Pancreas (tissue), 10 donors: ENCODE measurements at regions of chr14 and their contacts with region 1.

Region 1: DNA sequence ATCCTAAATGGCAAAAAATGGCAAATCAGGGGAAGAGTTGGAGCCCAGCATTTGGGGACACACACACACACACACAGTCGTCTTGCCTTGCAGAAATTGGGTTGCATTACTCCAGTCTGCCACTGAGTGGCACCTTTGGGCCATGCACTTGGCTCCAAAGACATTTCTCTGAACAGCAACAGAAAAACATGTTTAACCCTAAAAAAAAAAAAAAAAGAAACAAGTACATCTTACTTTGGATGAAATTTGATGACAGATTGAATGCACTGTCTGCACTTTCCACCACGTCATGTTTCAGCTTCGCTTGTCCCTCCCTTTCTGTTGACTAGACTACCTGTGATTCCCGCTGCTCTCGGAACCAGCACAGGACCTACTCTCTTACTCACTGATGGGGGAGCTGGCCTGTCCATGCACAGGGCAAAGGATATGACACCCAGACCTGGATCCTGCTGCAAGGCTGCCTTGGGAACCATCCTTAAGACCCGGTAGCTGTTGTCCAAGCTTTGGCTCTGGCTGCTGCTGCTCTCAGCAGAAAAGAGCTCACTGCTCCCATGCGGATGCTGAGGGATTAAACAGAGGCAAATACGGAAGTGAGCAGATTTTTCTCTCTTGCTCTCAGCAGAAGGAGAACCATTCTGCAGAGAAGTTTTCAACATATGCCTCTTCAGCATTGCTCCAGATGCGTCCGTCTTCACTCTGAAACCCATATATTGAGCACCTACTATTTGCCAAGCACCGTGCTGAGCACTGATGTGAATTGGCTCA is 376.8 kb downstream of the DPF3 start:
- DNase-seq: peak in 5 of 6 donors; percentile 32 to 81 (median 56)
- ATAC-seq: peak; percentile 85 to 96 (median 94)
- H3K4me3 ChIP-seq: no peak overlapping the region
- H3K27ac ChIP-seq: no peak overlapping the region
- H3K4me1 ChIP-seq: no peaks in the 10 kb centered on the region
- H3K27me3 ChIP-seq: no peaks in the 10 kb centered on the region
- CTCF ChIP-seq: peak; percentile 54 to 82 (median 72)

Region 2: DNA sequence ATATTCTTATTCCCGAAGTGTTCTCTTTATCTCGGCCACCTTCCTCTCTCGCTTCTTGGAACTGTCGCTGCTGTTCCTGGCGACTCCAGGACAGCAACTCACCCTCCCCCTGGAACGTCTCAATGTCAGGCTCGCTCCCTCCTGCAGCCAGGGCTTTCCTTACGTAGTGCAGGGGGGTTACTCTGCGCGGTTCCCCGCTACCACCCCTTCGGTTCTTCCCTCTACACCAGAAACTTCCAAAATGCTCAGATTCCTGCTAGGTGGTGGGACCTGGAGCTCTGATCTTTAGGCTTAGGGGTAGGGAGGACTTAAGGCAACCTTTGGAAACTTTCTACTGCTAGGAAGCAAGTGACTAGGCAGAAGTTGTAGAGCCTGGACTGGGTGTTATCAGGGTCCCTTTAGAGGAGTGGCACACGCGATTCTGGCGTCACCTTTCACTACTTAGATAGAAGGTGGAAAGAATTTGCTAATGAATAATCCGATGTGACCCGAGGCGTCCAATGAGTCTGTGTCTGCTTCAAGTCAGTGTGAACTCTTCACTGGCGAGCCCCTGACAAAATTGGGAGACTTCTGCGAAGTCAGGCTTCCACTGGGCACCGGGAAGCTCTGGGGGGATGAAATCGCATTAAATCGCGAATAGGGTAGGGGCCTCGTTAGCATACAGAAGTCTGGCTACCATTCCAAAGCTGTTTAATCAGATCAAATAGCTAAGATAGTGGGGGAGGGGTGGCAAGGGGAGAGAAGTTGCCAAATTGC is 377.7 kb after region 1 on chr14:
- intact Hi-C with region 1: loop called in 1 of 3 experiments (anchors 5 kb)
- DNase-seq: peak in 4 of 6 donors; percentile 19 to 56 (median 32)
- ATAC-seq: peak; percentile 41 to 55 (median 54)
- H3K4me3 ChIP-seq: peak overlapping the region; percentile 57 to 74 (median 64)
- H3K27ac ChIP-seq: peak overlapping the region in 2 of 4 donors; percentile 9 to 27
- H3K4me1 ChIP-seq: no peaks in the 10 kb centered on the region
- H3K27me3 ChIP-seq: peaks cover 0 to 7% (median 0%) of the 10 kb centered on the region in 4 donors
- CTCF ChIP-seq: no peak

Region 3: GRCh38 chr14:72904840-72905561 is 387.9 kb after region 1 on chr14:
- intact Hi-C with region 1: loop called in 2 of 3 experiments (anchors 2 to 10 kb)
- DNase-seq: peak in 4 of 6 donors; percentile 41 to 75 (median 52)
- ATAC-seq: peak; percentile 80 to 98 (median 92)
- H3K4me3 ChIP-seq: no peak overlapping the region
- H3K27ac ChIP-seq: no peak overlapping the region
- H3K4me1 ChIP-seq: peaks cover 0 to 6% (median 0%) of the 10 kb centered on the region in 3 donors
- H3K27me3 ChIP-seq: no peaks in the 10 kb centered on the region
- CTCF ChIP-seq: peak; percentile 80 to 92 (median 88)